ENCODE measurements at regions of chr18 and their contacts with region 1.

Region 1: GRCh38 chr18:11204020-11204419 is 54.7 kb upstream of the PIEZO2 start:
- DNase-seq: no peak
- H3K4me3 ChIP-seq: no peak overlapping the region
- H3K27ac ChIP-seq: no peak overlapping the region
- H3K4me1 ChIP-seq: no peaks in the 10 kb centered on the region
- H3K27me3 ChIP-seq: no peaks in the 10 kb centered on the region
- CTCF ChIP-seq: no peak
- POLR2A ChIP-seq: no peak

Region 2: GRCh38 chr18:11284811-11285210 is 80.8 kb after region 1 on chr18:
- intact Hi-C with region 1: loop called (anchors 5 kb)
- DNase-seq: no peak
- H3K4me3 ChIP-seq: no peak overlapping the region
- H3K27ac ChIP-seq: no peak overlapping the region
- H3K4me1 ChIP-seq: no peaks in the 10 kb centered on the region
- H3K27me3 ChIP-seq: no peaks in the 10 kb centered on the region
- CTCF ChIP-seq: no peak
- POLR2A ChIP-seq: no peak

Measured in breast epithelium (tissue), 4 donors.